ENCODE measurements at regions of chr22 and their contacts with region 1.

Region 1: DNA sequence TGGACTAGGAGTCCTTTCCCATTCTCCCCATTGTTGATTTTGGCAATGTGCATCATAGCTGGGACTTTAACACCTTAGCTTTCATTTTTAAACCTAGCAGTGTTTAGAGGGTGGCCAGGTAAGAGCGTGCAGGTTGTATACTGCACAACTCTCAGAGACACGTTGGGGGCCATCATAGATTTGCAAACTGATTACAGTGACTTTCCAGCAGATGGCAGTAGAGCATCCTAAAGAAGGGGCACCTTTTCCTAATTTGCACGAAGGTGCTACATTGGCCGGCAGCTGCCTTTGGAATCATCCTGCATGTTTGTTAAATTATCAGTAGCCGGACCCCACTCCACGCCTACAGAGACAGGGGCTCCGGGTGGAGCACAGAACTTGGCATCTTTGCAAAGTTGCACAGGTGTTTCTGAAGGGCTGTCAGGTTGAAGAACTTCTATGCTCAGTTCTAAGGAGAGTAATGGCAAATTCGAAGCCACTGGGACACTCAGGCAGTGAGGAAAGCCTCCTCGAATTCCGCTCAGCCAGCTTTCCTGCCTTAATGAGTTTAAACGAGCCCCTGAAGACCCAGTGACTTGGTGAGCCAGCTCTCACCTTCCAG is 7.7 kb downstream of the LHFPL7 start:
- DNase-seq: peak in 1 of 2 donors; percentile 20
- ATAC-seq: peak in 6 of 8 donors; percentile 11 to 57 (median 43)
- H3K4me3 ChIP-seq: no peak overlapping the region
- H3K27ac ChIP-seq: no peak overlapping the region
- H3K4me1 ChIP-seq: no peaks in the 10 kb centered on the region
- H3K27me3 ChIP-seq: peaks cover 0 to 4% (median 0%) of the 10 kb centered on the region in 7 donors
- CTCF ChIP-seq: peak; percentile 42 to 82 (median 77)

Region 2: GRCh38 chr22:24695561-24696511 is 243.0 kb before region 1 on chr22:
- intact Hi-C with region 1: no loop called
- DNase-seq: peak; percentile 29 to 43
- ATAC-seq: peak; percentile 26 to 72 (median 56)
- H3K4me3 ChIP-seq: no peak overlapping the region
- H3K27ac ChIP-seq: peak overlapping the region in 6 of 10 donors; percentile 8 to 64 (median 49)
- H3K4me1 ChIP-seq: peaks cover 2 to 27% (median 17%) of the 10 kb centered on the region in 9 donors
- H3K27me3 ChIP-seq: no peaks in the 10 kb centered on the region
- CTCF ChIP-seq: no peak

Region 3: DNA sequence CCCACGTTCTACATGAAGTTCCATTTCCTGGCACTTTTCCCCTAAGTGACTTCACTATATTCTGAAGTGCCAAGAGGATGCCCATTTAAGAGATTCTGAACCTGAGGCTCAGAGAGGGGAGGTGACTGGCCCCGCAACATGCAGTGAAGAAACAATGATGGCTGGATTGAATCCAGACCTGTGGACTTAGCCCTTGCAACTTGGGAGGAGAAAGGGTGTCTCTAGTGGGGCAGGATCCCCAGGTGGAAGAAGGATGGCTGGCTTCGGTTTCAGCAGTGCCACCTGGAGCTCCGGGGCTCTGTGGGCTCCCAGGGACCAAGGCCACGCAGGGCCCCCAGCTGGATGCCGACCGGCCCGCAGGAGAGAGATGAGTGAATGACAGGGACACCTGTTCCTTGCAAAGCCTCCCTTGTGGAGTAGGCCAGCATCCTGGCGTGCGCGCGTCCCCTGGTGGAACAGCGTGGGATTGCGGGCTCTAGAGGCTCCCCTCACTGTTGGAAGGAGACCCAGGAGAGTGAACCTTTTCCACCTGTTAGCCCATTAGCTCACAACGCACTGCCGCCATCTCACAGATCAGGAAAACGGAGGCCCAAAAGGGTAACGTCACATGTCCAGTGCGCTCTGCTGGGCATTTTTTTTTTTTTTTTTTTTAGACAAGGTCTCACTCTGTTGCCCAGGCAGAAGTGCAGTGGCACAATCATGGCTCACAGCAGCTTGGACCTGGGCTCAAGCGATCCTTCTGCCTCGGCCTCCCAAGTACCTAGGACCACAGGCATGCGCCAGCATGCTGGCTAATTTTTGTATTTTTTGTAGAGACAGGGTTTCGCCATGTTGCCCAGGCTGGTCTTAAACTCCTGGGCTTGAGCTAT is 118.4 kb after region 1 on chr22:
- intact Hi-C with region 1: loop called in 1 of 10 experiments (anchors 2 kb)
- DNase-seq: peak; percentile 46 to 75
- ATAC-seq: peak; percentile 70 to 81 (median 74)
- H3K4me3 ChIP-seq: no peak overlapping the region
- H3K27ac ChIP-seq: no peak overlapping the region
- H3K4me1 ChIP-seq: peaks cover 0 to 27% (median 8%) of the 10 kb centered on the region in 9 donors
- H3K27me3 ChIP-seq: no peaks in the 10 kb centered on the region
- CTCF ChIP-seq: peak; percentile 76 to 92 (median 86)